ENCODE measurements at regions of chr16 and their contacts with region 1.

Region 1: DNA sequence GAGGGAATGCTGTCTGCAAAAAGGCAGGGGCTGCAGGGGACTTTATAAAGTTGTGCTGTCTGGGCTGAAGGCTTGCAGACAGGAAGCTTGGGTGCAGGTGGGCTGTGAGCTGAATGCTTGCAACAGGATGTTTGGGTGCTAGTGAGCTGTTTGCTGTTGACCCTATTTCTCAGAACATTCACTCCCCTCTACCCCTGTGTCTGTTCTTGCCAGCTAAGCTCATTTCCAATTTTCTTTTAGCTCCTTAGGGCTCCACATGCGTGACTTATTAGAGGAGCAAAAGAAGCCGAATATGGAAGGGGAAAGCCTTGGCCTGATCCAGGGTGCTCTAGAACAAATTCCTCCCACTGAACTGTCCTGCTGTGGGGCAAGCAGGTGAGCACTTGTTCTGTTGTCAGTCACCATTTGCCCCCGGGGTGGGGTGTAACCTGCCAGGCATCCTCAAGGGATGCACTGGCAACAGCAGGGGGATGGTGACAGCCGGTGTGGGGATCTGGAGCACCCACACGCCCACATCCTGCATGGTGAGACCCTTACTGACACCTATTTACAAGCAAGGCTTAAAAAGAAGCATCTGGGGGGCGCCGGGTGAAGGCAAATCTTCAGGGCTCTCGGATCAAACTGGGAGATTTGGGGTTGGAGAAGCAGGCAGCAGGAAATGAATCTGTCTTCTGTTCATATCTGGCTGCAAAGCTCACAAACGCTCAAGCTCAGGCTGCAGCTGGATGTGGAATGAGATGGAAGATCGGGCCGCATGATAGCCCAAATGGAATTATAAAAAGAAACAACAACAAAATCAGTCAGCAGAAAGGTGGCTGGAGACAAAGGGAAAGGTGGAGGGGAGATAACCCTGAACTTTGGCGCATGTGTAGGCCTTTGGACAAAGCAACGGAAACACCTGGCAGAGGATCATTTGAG is 21.1 kb upstream of the NUP93 start:
- DNase-seq: no peak
- H3K4me3 ChIP-seq: no peak overlapping the region
- H3K27ac ChIP-seq: no peak overlapping the region
- H3K4me1 ChIP-seq: no peaks in the 10 kb centered on the region
- H3K27me3 ChIP-seq: no peaks in the 10 kb centered on the region
- CTCF ChIP-seq: no peak
- POLR2A ChIP-seq: no peak

Region 2: DNA sequence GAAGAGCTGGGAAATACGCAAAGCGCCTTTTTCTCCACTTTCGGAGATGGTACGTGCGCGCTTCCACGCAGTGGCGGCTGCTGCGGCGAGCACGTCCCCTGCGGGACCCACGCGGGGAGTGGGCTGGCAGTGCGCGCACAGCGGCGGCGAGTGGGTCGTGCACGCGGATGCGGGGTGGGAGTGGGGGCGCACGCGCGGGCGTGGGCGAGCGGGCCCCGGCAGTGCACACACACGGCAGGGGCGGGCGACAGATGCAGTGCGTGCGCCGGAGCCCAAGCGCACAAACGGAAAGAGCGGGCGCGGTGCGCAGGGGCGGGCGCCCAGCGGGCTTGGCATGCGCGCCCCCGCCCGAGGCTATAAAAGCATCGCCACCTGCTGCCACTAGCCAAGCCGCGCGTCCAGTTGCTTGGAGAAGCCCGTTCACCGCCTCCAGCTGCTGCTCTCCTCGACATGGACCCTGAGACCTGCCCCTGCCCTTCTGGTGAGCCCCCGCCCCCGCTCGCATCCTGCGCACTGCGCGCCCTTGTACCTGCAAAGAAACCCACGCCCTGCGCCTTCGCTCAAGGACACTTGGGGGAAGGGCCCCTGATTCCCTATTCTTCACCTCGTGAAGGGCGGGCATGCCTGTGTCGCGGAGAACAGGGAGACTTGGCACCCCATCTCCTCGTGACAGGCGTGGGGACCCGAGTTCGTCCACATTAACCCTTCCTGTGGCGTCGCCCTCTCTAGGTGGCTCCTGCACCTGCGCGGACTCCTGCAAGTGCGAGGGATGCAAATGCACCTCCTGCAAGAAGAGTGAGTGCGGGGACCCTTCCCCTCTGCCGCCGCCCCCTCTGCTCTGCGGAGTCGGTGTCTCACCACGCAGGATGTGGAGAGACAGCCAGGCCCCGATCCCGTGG is 119.4 kb before region 1 on chr16 and contains the start of gene MT3:
- intact Hi-C with region 1: loop called (anchors 10 kb)
- DNase-seq: no peak
- H3K4me3 ChIP-seq: peak within 1 kb of the TSS; percentile 34 to 69 (median 49)
- H3K27ac ChIP-seq: no peak within 1 kb of the TSS
- H3K4me1 ChIP-seq: peaks cover 3 to 9% of the 10 kb centered on the region in 2 donors
- H3K27me3 ChIP-seq: peaks cover 0 to 18% of the 10 kb centered on the region in 2 donors
- CTCF ChIP-seq: no peak
- POLR2A ChIP-seq: no peak
- total RNA-seq, gene MT3: not detected